Colonic mucosa (tissue), 4 donors: ENCODE measurements at regions of chr1 and their contacts with region 1.

Region 1: DNA sequence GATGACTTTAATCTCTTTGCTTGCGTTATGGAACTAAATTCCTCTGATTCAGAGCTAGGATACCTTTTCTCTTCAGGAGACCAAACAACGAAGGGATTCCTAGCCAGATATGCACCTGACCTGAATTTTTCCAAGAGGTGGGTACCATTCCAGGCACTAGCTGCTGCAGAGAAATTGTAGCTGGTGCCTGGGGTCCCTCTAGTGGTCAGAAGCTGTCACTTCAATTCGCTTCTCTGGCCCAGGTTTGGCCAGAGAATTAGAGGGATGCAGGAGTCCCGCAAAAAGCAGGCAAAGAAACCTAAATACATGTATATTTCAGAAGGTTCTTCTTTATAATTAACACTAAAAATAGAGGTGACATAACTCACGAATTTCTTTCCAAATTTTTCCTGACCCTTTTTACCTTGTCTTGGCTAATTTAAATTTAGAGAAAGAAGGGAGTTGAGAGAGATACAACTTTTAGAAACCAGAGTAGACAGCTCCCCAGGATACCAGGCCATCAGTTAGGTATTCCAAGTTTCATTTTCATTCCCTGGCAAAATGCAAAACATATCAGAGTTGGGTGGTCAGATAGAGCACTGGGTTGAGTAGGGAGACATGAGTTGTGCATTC is 9.6 kb downstream of the ACKR1 start:
- DNase-seq: peak; percentile 25
- H3K4me3 ChIP-seq: no peak overlapping the region
- H3K27ac ChIP-seq: no peak overlapping the region
- H3K4me1 ChIP-seq: no peaks in the 10 kb centered on the region
- H3K27me3 ChIP-seq: no peaks in the 10 kb centered on the region
- CTCF ChIP-seq: peak; percentile 83

Region 2: DNA sequence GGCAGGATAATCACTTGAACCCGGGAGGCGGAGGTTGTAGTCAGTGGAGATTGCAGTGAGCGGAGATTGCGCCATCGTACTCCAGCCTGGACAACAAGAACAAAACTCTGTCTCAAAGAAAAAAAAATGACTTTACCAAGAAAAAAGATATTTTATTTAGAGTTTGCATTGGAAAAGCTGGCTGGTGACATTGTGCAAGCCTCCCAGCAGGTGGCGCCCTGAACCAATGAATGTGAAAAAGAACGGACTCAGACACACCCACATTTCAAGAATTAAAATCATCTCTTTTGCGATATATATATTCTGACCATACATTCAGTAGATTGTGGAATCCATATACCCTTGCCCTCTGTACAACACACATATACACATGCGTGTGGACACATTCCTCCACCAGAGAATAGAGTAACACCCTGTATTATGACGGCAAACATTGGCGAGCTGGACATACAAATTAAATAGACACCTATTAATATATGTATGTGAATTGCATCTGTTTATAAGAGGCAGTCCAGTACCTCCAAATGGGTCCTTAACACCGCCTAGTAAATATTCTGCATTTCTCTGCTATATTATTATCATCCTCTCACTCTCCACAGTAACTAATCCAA is 81.9 kb before region 1 on chr1:
- intact Hi-C with region 1: loop called (anchors 5 kb)
- DNase-seq: peak; percentile 61
- H3K4me3 ChIP-seq: no peak overlapping the region
- H3K27ac ChIP-seq: no peak overlapping the region
- H3K4me1 ChIP-seq: no peaks in the 10 kb centered on the region
- H3K27me3 ChIP-seq: no peaks in the 10 kb centered on the region
- CTCF ChIP-seq: peak; percentile 88

Region 3: DNA sequence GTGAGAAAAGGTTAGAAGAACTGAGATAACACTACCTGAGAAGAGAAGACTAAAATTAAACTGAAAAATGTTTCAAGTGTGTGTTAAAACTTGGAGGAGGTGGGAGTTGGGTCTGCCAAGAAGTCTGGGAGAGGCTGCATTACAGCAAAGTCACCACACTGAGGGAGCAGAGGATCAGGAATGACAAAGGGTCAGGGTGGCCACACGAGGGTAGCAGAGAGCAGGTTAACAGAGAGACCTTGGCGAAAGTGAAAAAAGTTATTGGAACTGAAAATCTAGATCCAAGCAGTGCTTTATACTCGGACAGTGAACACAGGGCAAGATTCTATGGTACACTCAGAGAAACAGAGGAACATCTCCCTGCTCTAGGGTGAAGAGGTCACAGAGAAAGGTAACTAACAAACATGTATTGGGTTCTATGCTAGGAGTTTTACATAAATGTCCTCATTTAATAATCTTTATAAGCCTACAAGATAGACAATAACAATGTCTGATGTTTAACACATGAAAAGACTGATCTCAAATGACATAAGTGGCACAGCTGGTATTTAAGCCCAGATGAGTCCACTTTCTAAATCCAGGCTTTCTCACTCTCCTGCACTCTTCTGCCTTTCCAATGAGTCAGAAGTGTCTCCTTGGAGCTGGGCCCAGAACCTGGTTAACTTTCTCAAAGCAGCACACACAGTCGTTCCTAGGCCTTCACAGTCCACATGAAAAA is 53.1 kb before region 1 on chr1:
- intact Hi-C with region 1: loop called (anchors 5 kb)
- DNase-seq: peak; percentile 60
- H3K4me3 ChIP-seq: no peak overlapping the region
- H3K27ac ChIP-seq: no peak overlapping the region
- H3K4me1 ChIP-seq: no peaks in the 10 kb centered on the region
- H3K27me3 ChIP-seq: no peaks in the 10 kb centered on the region
- CTCF ChIP-seq: peak; percentile 87

Region 4: GRCh38 chr1:159282118-159282517 is 67.9 kb after region 1 on chr1:
- intact Hi-C with region 1: no loop called
- DNase-seq: no peak
- H3K4me3 ChIP-seq: no peak overlapping the region
- H3K27ac ChIP-seq: no peak overlapping the region
- H3K4me1 ChIP-seq: no peaks in the 10 kb centered on the region
- H3K27me3 ChIP-seq: no peaks in the 10 kb centered on the region
- CTCF ChIP-seq: no peak